ENCODE measurements at regions of chr19 and their contacts with region 1.

Region 1: DNA sequence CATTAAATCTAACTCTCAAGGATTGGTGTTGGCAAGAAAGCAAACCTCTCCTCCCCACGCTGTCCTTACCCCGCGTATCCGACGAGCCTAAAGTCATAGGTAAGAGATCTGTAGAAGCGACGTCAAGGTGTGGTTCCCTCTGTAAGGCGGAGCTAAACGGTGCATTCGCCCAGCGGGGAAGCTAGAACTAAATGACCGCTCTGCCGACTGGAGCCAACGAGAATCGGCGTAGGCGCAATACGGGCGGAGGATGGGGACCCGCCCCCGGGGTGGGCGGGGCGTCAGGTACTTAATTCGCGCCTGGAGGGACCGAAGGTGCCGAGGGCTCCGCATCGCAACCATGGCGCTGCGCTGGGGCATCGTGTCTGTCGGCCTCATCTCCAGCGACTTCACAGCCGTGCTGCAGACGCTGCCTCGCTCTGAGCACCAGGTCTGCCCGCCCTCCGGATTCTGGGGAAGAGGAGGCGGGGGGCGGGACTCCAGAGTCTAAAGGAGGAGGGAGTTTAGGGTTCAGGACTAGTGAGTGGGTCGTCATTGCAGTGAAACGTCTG is at the start of gene DHDH:
- DNase-seq: peak; percentile 86 to 92 (median 87)
- H3K4me3 ChIP-seq: peak within 1 kb of the TSS; percentile 39 to 54
- H3K4me3 Mint-ChIP-seq: peak within 1 kb of the TSS; percentile 77 to 92 (median 88)
- H3K27ac ChIP-seq: peak within 1 kb of the TSS; percentile 23
- H3K27ac Mint-ChIP-seq: peak within 1 kb of the TSS in 6 of 7 donors; percentile 49 to 93 (median 90)
- H3K4me1 ChIP-seq: peaks cover 6% of the 10 kb centered on the region
- H3K4me1 Mint-ChIP-seq: peaks cover 5 to 17% (median 11%) of the 10 kb centered on the region in 4 donors
- H3K27me3 ChIP-seq: no peaks in the 10 kb centered on the region
- H3K27me3 Mint-ChIP-seq: no peaks in the 10 kb centered on the region
- total RNA-seq, gene DHDH: 1.2 to 1.6 TPM

Region 2: DNA sequence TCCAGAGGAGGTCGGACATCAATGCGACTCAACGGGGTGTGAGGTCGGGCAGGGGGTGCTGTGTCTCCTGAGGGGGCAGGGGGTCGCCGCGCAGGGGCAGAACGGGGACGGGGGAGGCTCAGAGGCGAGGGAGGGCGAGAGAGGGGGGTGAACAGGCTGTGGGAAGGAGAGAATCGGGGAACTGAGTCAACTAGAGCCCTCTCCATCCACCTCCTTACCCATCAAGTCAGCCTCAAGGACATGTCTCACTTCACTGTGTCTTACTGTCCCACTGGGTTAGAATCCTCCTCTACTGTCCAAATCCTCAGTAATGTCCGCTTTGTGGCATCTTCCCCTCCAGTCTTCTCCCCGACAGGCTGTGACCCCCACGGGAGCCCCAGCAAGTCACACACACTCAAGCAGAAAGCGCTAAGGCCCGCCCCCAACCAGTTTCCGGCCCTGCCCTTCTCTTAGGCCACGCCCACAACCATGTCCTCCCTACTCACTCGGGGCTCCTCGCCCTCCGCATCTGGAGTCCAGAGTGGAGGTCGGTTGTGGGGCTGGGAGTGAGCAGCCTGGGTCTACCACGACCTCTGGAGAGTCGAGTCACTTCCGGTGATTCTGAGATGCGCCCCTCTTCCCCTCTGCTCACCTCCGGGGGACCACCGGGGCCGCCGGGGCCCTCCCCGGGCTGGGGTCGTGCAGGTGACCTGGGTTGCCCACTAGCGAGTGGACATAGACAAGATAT is 74.3 kb before region 1 on chr19:
- CTCF ChIA-PET with region 1: no interaction called
- POLR2A ChIA-PET with region 1: interaction called, 3 read pairs
- intact Hi-C with region 1: loop called (anchors 2 kb)
- DNase-seq: peak; percentile 72 to 82 (median 75)
- H3K4me3 ChIP-seq: peak overlapping the region; percentile 45 to 55
- H3K4me3 Mint-ChIP-seq: peak overlapping the region; percentile 90 to 99 (median 94)
- H3K27ac ChIP-seq: peak overlapping the region; percentile 35
- H3K27ac Mint-ChIP-seq: peak overlapping the region; percentile 75 to 98 (median 93)
- H3K4me1 ChIP-seq: peaks cover 14% of the 10 kb centered on the region
- H3K4me1 Mint-ChIP-seq: peaks cover 2 to 10% (median 6%) of the 10 kb centered on the region in 4 donors
- H3K27me3 ChIP-seq: no peaks in the 10 kb centered on the region
- H3K27me3 Mint-ChIP-seq: no peaks in the 10 kb centered on the region

Region 3: GRCh38 chr19:48899781-48900476 is 33.5 kb before region 1 on chr19 and contains the start of gene NUCB1:
- CTCF ChIA-PET with region 1: no interaction called
- POLR2A ChIA-PET with region 1: interaction called, 4 read pairs
- intact Hi-C with region 1: loop called (anchors 2 kb)
- DNase-seq: peak; percentile 97 to 99 (median 97)
- H3K4me3 ChIP-seq: peak within 1 kb of the TSS; percentile 73 to 85
- H3K4me3 Mint-ChIP-seq: peak within 1 kb of the TSS; percentile 92 to 99 (median 98)
- H3K27ac ChIP-seq: peak within 1 kb of the TSS; percentile 81
- H3K27ac Mint-ChIP-seq: peak within 1 kb of the TSS; percentile 88 to 97 (median 95)
- H3K4me1 ChIP-seq: peaks cover 30% of the 10 kb centered on the region
- H3K4me1 Mint-ChIP-seq: peaks cover 18 to 49% (median 29%) of the 10 kb centered on the region in 4 donors
- H3K27me3 ChIP-seq: peaks cover 4% of the 10 kb centered on the region
- H3K27me3 Mint-ChIP-seq: peaks cover under 1 to 2% of the 10 kb centered on the region in 2 donors
- total RNA-seq, gene NUCB1: 132 to 145 TPM

Region 4: DNA sequence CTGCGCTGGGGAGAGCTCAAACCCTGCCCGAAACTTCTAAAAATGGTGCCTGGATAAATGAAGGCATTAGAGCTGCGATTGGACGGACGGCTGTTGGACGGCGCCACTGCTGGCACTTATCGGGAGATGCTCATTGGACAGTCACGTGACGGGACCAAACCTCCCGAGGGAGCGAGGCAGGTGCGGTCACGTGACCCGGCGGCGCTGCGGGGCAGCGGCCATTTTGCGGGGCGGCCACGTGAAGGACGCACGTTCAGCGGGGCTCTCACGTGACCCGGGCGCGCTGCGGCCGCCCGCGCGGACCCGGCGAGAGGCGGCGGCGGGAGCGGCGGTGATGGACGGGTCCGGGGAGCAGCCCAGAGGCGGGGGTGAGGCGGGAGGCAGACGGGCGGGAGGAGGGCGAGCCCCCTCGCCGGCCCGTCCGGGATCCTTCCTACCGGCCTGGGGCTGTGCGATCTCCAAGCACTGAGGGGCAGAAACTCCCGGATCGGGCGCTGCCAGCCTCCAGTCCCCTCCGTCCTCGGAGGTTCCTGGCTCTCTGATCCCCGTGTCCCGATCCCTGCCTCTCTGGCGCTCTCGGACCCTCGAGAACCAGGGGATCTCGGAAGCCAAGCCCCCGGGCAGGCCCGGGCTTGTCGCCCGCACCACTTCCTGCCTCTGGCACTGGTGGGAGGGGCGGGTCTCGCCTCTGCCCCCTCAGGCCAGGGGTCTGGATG is 21.3 kb after region 1 on chr19 and contains the start of gene BAX:
- CTCF ChIA-PET with region 1: interaction called, 3 read pairs
- POLR2A ChIA-PET with region 1: interaction called, 8 read pairs
- intact Hi-C with region 1: loop called (anchors 1 kb)
- DNase-seq: peak; percentile 69 to 81 (median 74)
- H3K4me3 ChIP-seq: peak within 1 kb of the TSS; percentile 76 to 87
- H3K4me3 Mint-ChIP-seq: peak within 1 kb of the TSS; percentile 79 to 94 (median 90)
- H3K27ac ChIP-seq: peak within 1 kb of the TSS; percentile 86
- H3K27ac Mint-ChIP-seq: peak within 1 kb of the TSS; percentile 77 to 92 (median 86)
- H3K4me1 ChIP-seq: peaks cover 23% of the 10 kb centered on the region
- H3K4me1 Mint-ChIP-seq: peaks cover 12 to 34% (median 27%) of the 10 kb centered on the region in 4 donors
- H3K27me3 ChIP-seq: no peaks in the 10 kb centered on the region
- H3K27me3 Mint-ChIP-seq: no peaks in the 10 kb centered on the region
- total RNA-seq, gene BAX: 173 to 183 TPM

Measured in CD4-positive, alpha-beta memory T cell (primary cell).